ENCODE measurements at regions of chr12 and their contacts with region 1.

Region 1: GRCh38 chr12:57309420-57309819 is 58.4 kb upstream of the STAC3 start:
- DNase-seq: no peak
- H3K4me3 ChIP-seq: no peak overlapping the region
- H3K27ac ChIP-seq: no peak overlapping the region
- H3K4me1 ChIP-seq: no peaks in the 10 kb centered on the region
- H3K27me3 ChIP-seq: no peaks in the 10 kb centered on the region
- CTCF ChIP-seq: no peak
- POLR2A ChIP-seq: no peak

Region 2: DNA sequence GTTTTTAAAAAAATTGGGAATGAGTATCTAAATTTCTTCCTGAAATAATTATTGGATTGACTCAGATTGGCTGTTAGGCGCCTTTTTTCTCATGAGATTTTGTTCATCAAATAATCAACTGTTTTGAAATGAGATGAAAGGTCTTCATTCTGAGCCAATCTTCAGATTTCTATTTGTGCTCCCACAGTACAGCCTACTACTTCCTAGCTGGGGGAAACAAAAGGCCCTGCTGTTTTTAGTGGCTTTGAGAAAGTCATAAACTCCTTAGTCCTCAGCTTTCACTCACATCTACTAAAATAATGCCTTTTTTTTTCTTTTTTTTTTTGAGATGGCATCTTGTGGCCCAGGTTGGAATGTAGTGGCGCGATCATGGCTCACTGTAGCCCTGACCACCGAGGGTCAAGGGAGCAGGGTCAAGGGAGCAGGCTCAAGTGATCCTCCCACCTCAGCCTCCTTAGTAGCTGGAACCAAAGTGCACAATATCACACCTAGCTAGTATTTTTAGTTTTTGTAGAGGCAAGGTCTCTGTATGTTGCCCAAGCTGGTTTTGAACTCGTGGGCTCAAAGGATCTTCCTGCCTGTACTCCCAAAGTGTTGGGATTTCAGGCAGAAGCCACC is 599.6 kb before region 1 on chr12:
- intact Hi-C with region 1: no loop called
- DNase-seq: no peak
- H3K4me3 ChIP-seq: no peak overlapping the region
- H3K27ac ChIP-seq: no peak overlapping the region
- H3K4me1 ChIP-seq: peaks cover 4 to 14% (median 4%) of the 10 kb centered on the region in 3 donors
- H3K27me3 ChIP-seq: no peaks in the 10 kb centered on the region
- CTCF ChIP-seq: no peak
- POLR2A ChIP-seq: no peak

Region 3: GRCh38 chr12:57166971-57167371 is 142.4 kb before region 1 on chr12:
- intact Hi-C with region 1: no loop called
- DNase-seq: no peak
- H3K4me3 ChIP-seq: no peak overlapping the region
- H3K27ac ChIP-seq: peak overlapping the region; percentile 66 to 86 (median 78)
- H3K4me1 ChIP-seq: peaks cover 37 to 78% (median 41%) of the 10 kb centered on the region in 3 donors
- H3K27me3 ChIP-seq: no peaks in the 10 kb centered on the region
- CTCF ChIP-seq: no peak
- POLR2A ChIP-seq: no peak

Region 4: DNA sequence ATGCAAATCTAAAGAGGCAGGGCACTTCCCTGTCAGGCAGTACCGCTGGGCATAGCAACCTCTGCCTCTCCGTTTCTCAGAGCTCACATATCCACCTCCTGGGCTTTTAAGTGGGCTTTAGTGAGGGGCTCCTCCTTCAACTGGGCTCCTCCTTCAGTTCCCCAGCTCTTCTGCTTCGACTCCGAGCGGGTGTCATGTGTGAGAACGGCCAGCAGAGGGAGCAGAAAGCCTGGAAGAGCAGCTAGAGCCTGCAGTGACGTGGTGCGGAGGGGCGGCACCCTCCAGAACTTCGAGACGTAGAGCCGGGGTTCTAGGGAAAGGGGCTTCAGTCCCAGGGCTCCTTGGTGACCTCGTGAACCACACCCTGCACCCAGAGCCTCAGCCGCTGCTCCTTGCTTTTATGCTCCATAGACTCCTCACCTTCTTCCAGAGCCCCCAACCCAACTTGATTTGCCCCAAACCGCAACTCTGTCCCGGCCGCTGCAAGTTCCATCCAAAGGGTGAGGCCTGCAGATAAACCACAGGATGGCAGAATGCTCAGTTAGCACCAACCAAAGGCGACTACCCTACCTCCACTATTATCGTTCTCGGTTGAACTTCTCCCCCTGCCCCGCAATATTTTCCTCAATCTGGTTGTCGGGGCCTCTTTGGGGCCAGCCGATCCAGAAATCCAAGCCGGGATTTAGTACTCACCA is 149.8 kb after region 1 on chr12:
- intact Hi-C with region 1: loop called (anchors 10 kb)
- DNase-seq: peak; percentile 73
- H3K4me3 ChIP-seq: peak overlapping the region; percentile 39 to 82 (median 61)
- H3K27ac ChIP-seq: peak overlapping the region; percentile 57 to 90 (median 78)
- H3K4me1 ChIP-seq: peaks cover 25 to 52% (median 33%) of the 10 kb centered on the region in 3 donors
- H3K27me3 ChIP-seq: peaks cover 0 to 46% (median 0%) of the 10 kb centered on the region in 4 donors
- CTCF ChIP-seq: peak; percentile 96 to 99 (median 98)
- POLR2A ChIP-seq: peak in 2 of 4 donors; percentile 4 to 49

Region 5: GRCh38 chr12:57552835-57553313 is 243.5 kb after region 1 on chr12:
- intact Hi-C with region 1: no loop called
- DNase-seq: no peak
- H3K4me3 ChIP-seq: no peak overlapping the region
- H3K27ac ChIP-seq: no peak overlapping the region
- H3K4me1 ChIP-seq: peaks cover 3 to 14% (median 5%) of the 10 kb centered on the region in 3 donors
- H3K27me3 ChIP-seq: peaks cover 0 to 40% (median 0%) of the 10 kb centered on the region in 4 donors
- CTCF ChIP-seq: no peak
- POLR2A ChIP-seq: no peak